ENCODE measurements at regions of chr1 and their contacts with region 1.

Region 1: GRCh38 chr1:67760030-67760821 is 73.0 kb downstream of the GNG12 start:
- DNase-seq: peak; percentile 69
- ATAC-seq: peak; percentile 75
- H3K4me3 ChIP-seq: no peak overlapping the region
- H3K4me3 Mint-ChIP-seq: no peak overlapping the region
- H3K27ac ChIP-seq: no peak overlapping the region
- H3K27ac Mint-ChIP-seq: no peak overlapping the region
- H3K4me1 ChIP-seq: peaks cover 5 to 9% of the 10 kb centered on the region in 2 donors
- H3K4me1 Mint-ChIP-seq: peaks cover 11% of the 10 kb centered on the region
- H3K27me3 ChIP-seq: peaks cover 0 to 17% (median 10%) of the 10 kb centered on the region in 4 experiments
- H3K27me3 Mint-ChIP-seq: peaks cover 24% of the 10 kb centered on the region
- CTCF ChIP-seq: peak; percentile 95

Region 2: GRCh38 chr1:67227196-67227595 is 533.0 kb before region 1 on chr1:
- CTCF ChIA-PET with region 1: no interaction called
- POLR2A ChIA-PET with region 1: no interaction called
- intact Hi-C with region 1: loop called (anchors 2 kb)
- DNase-seq: no peak
- ATAC-seq: no peak
- H3K4me3 ChIP-seq: no peak overlapping the region
- H3K4me3 Mint-ChIP-seq: no peak overlapping the region
- H3K27ac ChIP-seq: no peak overlapping the region
- H3K27ac Mint-ChIP-seq: no peak overlapping the region
- H3K4me1 ChIP-seq: no peaks in the 10 kb centered on the region
- H3K4me1 Mint-ChIP-seq: no peaks in the 10 kb centered on the region
- H3K27me3 ChIP-seq: peaks cover 0 to 4% (median 0%) of the 10 kb centered on the region in 4 experiments
- H3K27me3 Mint-ChIP-seq: peaks cover 18% of the 10 kb centered on the region
- CTCF ChIP-seq: no peak

Region 3: GRCh38 chr1:67524143-67525052 is 235.8 kb before region 1 on chr1:
- CTCF ChIA-PET with region 1: interaction called, 21 read pairs
- POLR2A ChIA-PET with region 1: no interaction called
- intact Hi-C with region 1: no loop called
- DNase-seq: no peak
- ATAC-seq: no peak
- H3K4me3 ChIP-seq: no peak overlapping the region
- H3K4me3 Mint-ChIP-seq: no peak overlapping the region
- H3K27ac ChIP-seq: no peak overlapping the region
- H3K27ac Mint-ChIP-seq: no peak overlapping the region
- H3K4me1 ChIP-seq: no peaks in the 10 kb centered on the region
- H3K4me1 Mint-ChIP-seq: no peaks in the 10 kb centered on the region
- H3K27me3 ChIP-seq: peaks cover 0 to 2% (median 0%) of the 10 kb centered on the region in 4 experiments
- H3K27me3 Mint-ChIP-seq: peaks cover 16% of the 10 kb centered on the region
- CTCF ChIP-seq: no peak

Region 4: GRCh38 chr1:67561704-67562113 is 198.5 kb before region 1 on chr1:
- CTCF ChIA-PET with region 1: interaction called, 289 read pairs
- POLR2A ChIA-PET with region 1: no interaction called
- intact Hi-C with region 1: loop called (anchors 1 kb)
- DNase-seq: peak; percentile 70
- ATAC-seq: peak; percentile 57
- H3K4me3 ChIP-seq: no peak overlapping the region
- H3K4me3 Mint-ChIP-seq: no peak overlapping the region
- H3K27ac ChIP-seq: no peak overlapping the region
- H3K27ac Mint-ChIP-seq: no peak overlapping the region
- H3K4me1 ChIP-seq: no peaks in the 10 kb centered on the region
- H3K4me1 Mint-ChIP-seq: no peaks in the 10 kb centered on the region
- H3K27me3 ChIP-seq: no peaks in the 10 kb centered on the region
- H3K27me3 Mint-ChIP-seq: peaks cover 10% of the 10 kb centered on the region
- CTCF ChIP-seq: peak; percentile 84

Region 5: DNA sequence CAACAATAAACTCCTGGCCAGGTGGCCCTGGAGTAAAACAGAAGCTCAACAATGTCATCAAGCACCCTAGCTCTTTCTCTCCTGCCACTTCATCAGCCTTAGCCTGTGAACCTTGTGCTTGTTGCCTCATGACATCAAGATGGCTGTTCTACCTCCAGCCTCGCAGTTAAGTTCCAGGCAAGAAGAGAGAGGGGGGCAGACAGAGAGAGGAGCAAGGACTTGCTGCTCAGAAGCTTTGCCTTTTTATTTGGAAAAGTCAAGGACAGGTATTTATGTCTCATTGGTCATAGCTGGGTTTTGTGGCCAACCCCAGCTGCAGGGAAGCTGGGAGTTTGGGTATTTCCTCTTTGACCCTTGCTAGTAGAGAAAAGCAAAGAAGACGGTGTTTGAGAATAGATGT is 135.5 kb before region 1 on chr1:
- CTCF ChIA-PET with region 1: interaction called, 10 read pairs
- POLR2A ChIA-PET with region 1: no interaction called
- intact Hi-C with region 1: no loop called
- DNase-seq: no peak
- ATAC-seq: no peak
- H3K4me3 ChIP-seq: no peak overlapping the region
- H3K4me3 Mint-ChIP-seq: no peak overlapping the region
- H3K27ac ChIP-seq: no peak overlapping the region
- H3K27ac Mint-ChIP-seq: no peak overlapping the region
- H3K4me1 ChIP-seq: no peaks in the 10 kb centered on the region
- H3K4me1 Mint-ChIP-seq: no peaks in the 10 kb centered on the region
- H3K27me3 ChIP-seq: no peaks in the 10 kb centered on the region
- H3K27me3 Mint-ChIP-seq: peaks cover 19% of the 10 kb centered on the region
- CTCF ChIP-seq: no peak

Region 6: DNA sequence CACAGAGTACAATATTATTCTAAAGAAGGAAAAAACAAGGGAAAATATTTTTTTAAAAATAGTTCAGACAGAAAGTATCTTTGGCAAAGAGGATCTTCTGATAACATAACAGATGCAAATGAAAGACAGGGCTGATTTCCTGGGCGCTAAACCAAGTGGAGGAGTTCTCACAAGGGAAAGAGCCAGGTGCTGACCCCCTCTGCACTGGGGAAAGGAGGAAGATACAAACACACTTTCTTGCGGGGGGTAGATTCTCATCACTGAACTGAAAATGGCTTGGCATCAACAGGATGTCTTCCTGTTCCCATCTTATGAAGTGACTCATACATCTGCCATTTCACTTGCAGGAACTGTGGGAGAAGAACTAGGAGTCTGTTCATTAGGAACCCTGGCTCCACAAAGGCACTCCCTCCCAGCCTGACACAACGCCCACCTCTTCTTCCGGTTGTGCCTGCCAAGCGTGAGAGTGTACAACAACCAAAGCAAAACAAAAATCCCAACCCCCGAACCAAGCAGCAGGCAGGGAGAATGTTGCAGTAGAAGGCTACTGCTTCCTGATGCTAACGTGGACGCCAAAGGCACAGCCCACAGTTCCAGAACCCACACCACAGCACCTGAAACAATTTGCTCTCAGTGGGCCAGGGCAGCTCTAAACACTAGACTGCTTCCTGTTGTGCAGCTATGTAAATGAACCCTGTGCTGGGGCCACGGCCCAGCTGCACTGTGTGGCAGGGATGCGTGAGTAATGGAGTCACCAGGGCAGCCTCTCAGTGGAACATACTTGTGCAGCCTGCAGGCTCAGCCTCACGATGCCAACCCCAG is 24.2 kb before region 1 on chr1:
- CTCF ChIA-PET with region 1: interaction called, 27 read pairs
- POLR2A ChIA-PET with region 1: no interaction called
- intact Hi-C with region 1: no loop called
- DNase-seq: peak; percentile 58
- ATAC-seq: peak; percentile 98
- H3K4me3 ChIP-seq: peak overlapping the region; percentile 18 to 55 (median 30)
- H3K4me3 Mint-ChIP-seq: peak overlapping the region; percentile 89
- H3K27ac ChIP-seq: peak overlapping the region; percentile 33 to 71
- H3K27ac Mint-ChIP-seq: peak overlapping the region; percentile 98
- H3K4me1 ChIP-seq: peaks cover 32 to 43% of the 10 kb centered on the region in 2 donors
- H3K4me1 Mint-ChIP-seq: peaks cover 40% of the 10 kb centered on the region
- H3K27me3 ChIP-seq: no peaks in the 10 kb centered on the region
- H3K27me3 Mint-ChIP-seq: no peaks in the 10 kb centered on the region
- CTCF ChIP-seq: no peak

Region 7: GRCh38 chr1:67748630-67749029 is 11.6 kb before region 1 on chr1:
- CTCF ChIA-PET with region 1: interaction called, 15 read pairs
- POLR2A ChIA-PET with region 1: no interaction called
- intact Hi-C with region 1: no loop called
- DNase-seq: no peak
- ATAC-seq: no peak
- H3K4me3 ChIP-seq: no peak overlapping the region
- H3K4me3 Mint-ChIP-seq: no peak overlapping the region
- H3K27ac ChIP-seq: no peak overlapping the region
- H3K27ac Mint-ChIP-seq: no peak overlapping the region
- H3K4me1 ChIP-seq: no peaks in the 10 kb centered on the region
- H3K4me1 Mint-ChIP-seq: no peaks in the 10 kb centered on the region
- H3K27me3 ChIP-seq: peaks cover 0 to 4% (median 0%) of the 10 kb centered on the region in 4 experiments
- H3K27me3 Mint-ChIP-seq: peaks cover 17% of the 10 kb centered on the region
- CTCF ChIP-seq: no peak

Region 8: GRCh38 chr1:67814121-67814772 is 54.0 kb after region 1 on chr1:
- CTCF ChIA-PET with region 1: no interaction called
- POLR2A ChIA-PET with region 1: no interaction called
- intact Hi-C with region 1: no loop called
- DNase-seq: no peak
- ATAC-seq: no peak
- H3K4me3 ChIP-seq: no peak overlapping the region
- H3K4me3 Mint-ChIP-seq: no peak overlapping the region
- H3K27ac ChIP-seq: no peak overlapping the region
- H3K27ac Mint-ChIP-seq: no peak overlapping the region
- H3K4me1 ChIP-seq: no peaks in the 10 kb centered on the region
- H3K4me1 Mint-ChIP-seq: no peaks in the 10 kb centered on the region
- H3K27me3 ChIP-seq: no peaks in the 10 kb centered on the region
- H3K27me3 Mint-ChIP-seq: peaks cover 12% of the 10 kb centered on the region
- CTCF ChIP-seq: no peak

Region 9: DNA sequence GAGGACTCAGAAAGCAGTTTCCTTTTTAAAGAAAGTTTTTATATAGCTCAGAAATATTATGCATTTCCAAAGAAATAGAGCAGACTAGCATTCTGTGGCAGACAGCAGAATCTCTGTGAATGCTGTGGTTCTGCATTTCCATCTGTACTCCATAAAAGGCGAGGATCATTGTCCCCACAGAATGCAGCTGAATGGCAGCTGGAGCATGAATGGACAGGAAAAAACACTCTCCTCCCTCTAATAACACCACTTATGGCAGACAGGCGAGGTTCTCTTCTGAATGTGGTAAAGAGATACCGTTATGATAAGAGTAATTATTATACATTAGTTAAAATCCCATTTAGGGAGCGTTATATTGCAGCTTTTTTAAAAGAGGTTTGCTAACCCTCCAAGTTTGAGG is 553.5 kb after region 1 on chr1:
- CTCF ChIA-PET with region 1: no interaction called
- POLR2A ChIA-PET with region 1: no interaction called
- intact Hi-C with region 1: no loop called
- DNase-seq: no peak
- ATAC-seq: no peak
- H3K4me3 ChIP-seq: no peak overlapping the region
- H3K4me3 Mint-ChIP-seq: no peak overlapping the region
- H3K27ac ChIP-seq: no peak overlapping the region
- H3K27ac Mint-ChIP-seq: no peak overlapping the region
- H3K4me1 ChIP-seq: no peaks in the 10 kb centered on the region
- H3K4me1 Mint-ChIP-seq: no peaks in the 10 kb centered on the region
- H3K27me3 ChIP-seq: peaks cover 0 to 2% (median 0%) of the 10 kb centered on the region in 4 experiments
- H3K27me3 Mint-ChIP-seq: peaks cover 24% of the 10 kb centered on the region
- CTCF ChIP-seq: no peak

Measured in B cell (primary cell).